ENCODE measurements at regions of chr17 and their contacts with region 1.

Region 1: GRCh38 chr17:64091116-64091515 is 38.8 kb downstream of the ERN1 start:
- DNase-seq: peak; percentile 20
- H3K4me3 Mint-ChIP-seq: peak overlapping the region; percentile 81
- H3K27ac Mint-ChIP-seq: peak overlapping the region; percentile 98
- H3K4me1 Mint-ChIP-seq: peaks cover 89% of the 10 kb centered on the region
- H3K27me3 Mint-ChIP-seq: no peaks in the 10 kb centered on the region

Region 2: DNA sequence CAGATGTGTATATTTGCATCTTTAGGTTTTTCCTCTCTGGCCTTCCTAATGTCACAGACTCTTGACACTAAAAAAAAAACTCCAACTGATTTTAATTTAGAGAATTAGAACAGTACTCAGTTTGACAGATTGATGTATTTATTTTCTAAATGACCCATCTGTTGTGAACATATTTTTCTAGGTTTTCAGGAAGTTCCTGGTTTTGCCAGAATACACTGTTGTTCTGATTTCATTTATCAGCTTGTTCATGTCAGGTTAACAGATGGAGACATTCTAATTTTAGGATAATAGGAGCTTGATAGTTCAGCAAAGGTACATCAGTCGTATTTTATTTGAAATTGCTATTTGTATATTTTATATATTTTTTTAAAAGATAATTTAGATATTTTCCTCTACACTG is 991.7 kb before region 1 on chr17:
- intact Hi-C with region 1: no loop called
- DNase-seq: no peak
- H3K4me3 Mint-ChIP-seq: no peak overlapping the region
- H3K27ac Mint-ChIP-seq: no peak overlapping the region
- H3K4me1 Mint-ChIP-seq: no peaks in the 10 kb centered on the region
- H3K27me3 Mint-ChIP-seq: no peaks in the 10 kb centered on the region

Region 3: DNA sequence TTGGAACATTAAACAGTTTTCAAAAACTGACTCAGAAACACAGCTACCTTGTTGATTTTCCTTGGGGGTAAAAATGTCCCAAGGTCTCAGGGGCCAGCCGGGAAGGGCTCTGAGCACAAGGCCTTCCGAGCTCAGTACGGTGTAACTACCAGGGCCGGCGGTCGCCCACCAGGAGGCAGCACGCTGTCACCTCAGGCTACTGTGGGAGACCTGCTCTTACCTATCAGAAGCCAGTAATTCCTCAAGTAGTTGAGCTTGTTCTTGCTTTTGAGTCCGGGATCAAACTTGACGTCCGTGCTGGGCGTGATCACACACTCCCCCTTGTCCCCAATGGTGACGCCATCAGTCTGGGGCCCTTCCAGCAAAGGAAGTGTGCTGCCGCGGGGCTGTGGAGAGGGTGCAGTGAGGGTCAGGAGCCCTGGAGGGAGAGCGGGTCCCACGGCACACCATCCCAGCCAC is 27.3 kb before region 1 on chr17:
- intact Hi-C with region 1: loop called (anchors 1 kb)
- DNase-seq: peak; percentile 23
- H3K4me3 Mint-ChIP-seq: no peak overlapping the region
- H3K27ac Mint-ChIP-seq: peak overlapping the region; percentile 63
- H3K4me1 Mint-ChIP-seq: peaks cover 91% of the 10 kb centered on the region
- H3K27me3 Mint-ChIP-seq: no peaks in the 10 kb centered on the region

Region 4: GRCh38 chr17:64107500-64108235 is 16.6 kb after region 1 on chr17:
- intact Hi-C with region 1: loop called (anchors 2 kb)
- DNase-seq: no peak
- H3K4me3 Mint-ChIP-seq: peak overlapping the region; percentile 26
- H3K27ac Mint-ChIP-seq: peak overlapping the region; percentile 58
- H3K4me1 Mint-ChIP-seq: peaks cover 81% of the 10 kb centered on the region
- H3K27me3 Mint-ChIP-seq: no peaks in the 10 kb centered on the region

Region 5: GRCh38 chr17:64115871-64116534 is 24.9 kb after region 1 on chr17:
- intact Hi-C with region 1: loop called (anchors 1 kb)
- DNase-seq: no peak
- H3K4me3 Mint-ChIP-seq: peak overlapping the region; percentile 70
- H3K27ac Mint-ChIP-seq: peak overlapping the region; percentile 83
- H3K4me1 Mint-ChIP-seq: peaks cover 68% of the 10 kb centered on the region
- H3K27me3 Mint-ChIP-seq: no peaks in the 10 kb centered on the region

Region 6: GRCh38 chr17:64121878-64122277 is 30.8 kb after region 1 on chr17:
- intact Hi-C with region 1: loop called (anchors 1 kb)
- DNase-seq: no peak
- H3K4me3 Mint-ChIP-seq: no peak overlapping the region
- H3K27ac Mint-ChIP-seq: peak overlapping the region; percentile 98
- H3K4me1 Mint-ChIP-seq: peaks cover 87% of the 10 kb centered on the region
- H3K27me3 Mint-ChIP-seq: no peaks in the 10 kb centered on the region